ENCODE measurements at regions of chr9 and their contacts with region 1.

Region 1: DNA sequence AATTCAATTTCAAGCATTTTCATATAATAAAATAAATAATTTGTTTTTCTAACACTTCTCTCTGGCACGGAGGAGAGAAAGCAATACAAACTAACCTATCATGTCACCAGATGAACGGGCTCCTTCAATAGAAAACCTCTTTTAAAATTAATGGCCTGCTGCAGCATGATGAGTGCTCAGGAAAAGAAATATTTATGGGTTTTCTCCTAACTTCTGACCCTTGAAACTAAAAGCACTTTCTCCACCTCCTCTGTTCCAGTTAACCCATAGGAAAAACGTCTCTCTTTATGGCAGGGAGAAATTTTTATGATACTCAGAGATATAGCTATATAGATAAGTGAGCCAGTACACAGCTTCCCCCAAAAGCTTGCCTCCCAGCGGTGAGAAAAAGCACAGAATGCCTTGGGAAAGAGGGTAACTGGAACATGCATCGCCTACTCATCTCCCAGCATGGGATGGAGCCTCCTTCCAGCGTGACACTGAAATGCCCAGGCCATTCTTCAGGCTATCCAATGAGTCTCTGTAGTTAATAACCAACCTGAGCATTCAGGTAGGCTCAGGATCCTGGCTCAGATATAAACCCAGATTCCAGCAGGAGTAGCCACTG is 963.0 kb upstream of the DMAC1 start:
- DNase-seq: no peak
- H3K4me3 Mint-ChIP-seq: no peak overlapping the region
- H3K27ac Mint-ChIP-seq: no peak overlapping the region
- H3K4me1 Mint-ChIP-seq: no peaks in the 10 kb centered on the region
- H3K27me3 Mint-ChIP-seq: no peaks in the 10 kb centered on the region

Region 2: DNA sequence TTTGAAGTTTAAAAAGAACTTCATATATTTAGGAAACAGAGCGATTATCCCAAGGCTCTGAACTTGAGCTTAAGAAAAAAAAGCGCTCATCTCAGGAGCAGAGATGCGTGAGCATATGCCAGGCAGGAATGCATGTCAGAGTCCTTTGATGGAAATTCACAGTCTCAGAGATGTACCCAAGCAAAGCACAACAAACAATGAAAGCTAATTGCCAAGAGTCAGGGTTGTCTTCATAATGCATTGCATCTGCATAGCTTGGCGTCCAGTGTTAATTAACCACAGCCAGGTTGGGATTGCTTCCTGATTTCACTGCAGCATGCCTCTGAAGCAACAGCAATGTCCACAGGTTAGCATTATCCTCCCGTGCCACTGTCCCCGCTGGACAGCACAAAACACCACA is 56.1 kb before region 1 on chr9:
- intact Hi-C with region 1: loop called (anchors 10 kb)
- DNase-seq: no peak
- H3K4me3 Mint-ChIP-seq: no peak overlapping the region
- H3K27ac Mint-ChIP-seq: no peak overlapping the region
- H3K4me1 Mint-ChIP-seq: no peaks in the 10 kb centered on the region
- H3K27me3 Mint-ChIP-seq: no peaks in the 10 kb centered on the region

Measured in activated CD4-positive, alpha-beta T cell treated with anti-CD3 and anti-CD28 coated beads, Interleukin-2, amount 10 ng/mL, durations not matched to agents 24 days and 14 days (primary cell).